Right cardiac atrium (tissue), 5 donors: ENCODE measurements at regions of chr11 and their contacts with region 1.

Region 1: GRCh38 chr11:15650105-15650938 is 535.6 kb downstream of the INSC start:
- DNase-seq: peak; percentile 96 to 99 (median 99)
- ATAC-seq: peak; percentile 98 to 100
- H3K4me3 ChIP-seq: peak overlapping the region; percentile 13
- H3K27ac ChIP-seq: peak overlapping the region; percentile 40
- H3K4me1 ChIP-seq: peaks cover 6% of the 10 kb centered on the region
- H3K27me3 ChIP-seq: no peaks in the 10 kb centered on the region

Region 2: GRCh38 chr11:15327786-15328231 is 322.5 kb before region 1 on chr11:
- intact Hi-C with region 1: loop called in 1 of 4 experiments (anchors 10 kb)
- DNase-seq: peak; percentile 59 to 84 (median 79)
- ATAC-seq: peak; percentile 78 to 81
- H3K4me3 ChIP-seq: no peak overlapping the region
- H3K27ac ChIP-seq: no peak overlapping the region
- H3K4me1 ChIP-seq: no peaks in the 10 kb centered on the region
- H3K27me3 ChIP-seq: no peaks in the 10 kb centered on the region

Region 3: DNA sequence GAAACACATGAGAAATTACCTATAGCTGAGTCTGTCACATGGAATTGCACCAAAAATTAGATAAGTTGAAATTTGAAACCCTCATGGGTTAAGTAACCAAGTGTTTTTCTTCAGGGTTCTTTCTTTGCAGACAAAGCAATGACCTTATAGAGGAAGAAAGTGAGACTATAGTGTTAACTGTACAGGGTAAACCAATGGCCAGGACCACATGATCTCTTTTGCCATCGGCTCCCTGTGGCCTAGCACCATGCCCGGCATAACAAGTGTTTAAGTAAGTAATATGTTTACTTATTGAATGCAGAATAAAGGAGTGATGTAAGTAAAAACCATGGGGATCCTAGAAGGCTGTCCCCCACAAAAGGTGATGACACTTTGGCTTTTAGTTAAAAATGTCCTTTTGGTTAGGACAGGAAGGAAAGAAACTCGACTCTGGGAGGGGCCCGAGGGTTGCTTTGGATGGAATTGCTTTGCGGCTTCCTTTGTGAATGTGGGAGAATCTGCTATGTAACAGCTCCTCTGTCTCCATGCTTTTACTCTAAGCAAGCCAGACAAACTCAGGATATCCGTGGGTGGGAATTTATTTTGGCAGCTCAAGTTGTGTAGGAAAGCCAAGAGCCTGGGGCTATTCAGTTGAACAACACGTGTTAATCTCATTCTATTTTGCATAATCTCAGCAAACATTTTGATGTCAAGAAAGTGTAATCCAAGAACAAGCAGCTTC is 80.9 kb before region 1 on chr11:
- intact Hi-C with region 1: no loop called
- DNase-seq: peak in 1 of 3 donors; percentile 34
- ATAC-seq: peak; percentile 93 to 97
- H3K4me3 ChIP-seq: no peak overlapping the region
- H3K27ac ChIP-seq: no peak overlapping the region
- H3K4me1 ChIP-seq: peaks cover 4% of the 10 kb centered on the region
- H3K27me3 ChIP-seq: no peaks in the 10 kb centered on the region

Region 4: DNA sequence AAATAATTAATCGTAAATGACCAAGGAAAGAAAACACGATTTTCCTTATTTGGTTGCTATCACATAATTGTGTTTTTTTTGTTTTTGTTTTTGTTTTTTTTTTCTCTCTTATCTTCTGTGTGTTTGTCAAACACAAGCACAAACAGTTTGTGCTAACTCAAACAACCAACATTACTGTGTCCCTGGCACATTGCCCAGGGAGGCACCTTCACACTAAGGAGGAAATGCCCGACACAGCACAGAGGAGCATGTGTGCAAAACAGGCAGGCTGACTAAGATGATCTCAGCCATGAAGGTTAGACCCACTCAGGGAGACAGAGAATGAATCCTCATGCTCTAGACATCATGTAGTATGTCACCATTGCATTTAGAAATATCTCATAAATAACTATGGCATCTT is 575.9 kb after region 1 on chr11:
- intact Hi-C with region 1: no loop called
- DNase-seq: peak; percentile 34 to 80 (median 57)
- ATAC-seq: peak; percentile 78 to 86
- H3K4me3 ChIP-seq: no peak overlapping the region
- H3K27ac ChIP-seq: no peak overlapping the region
- H3K4me1 ChIP-seq: peaks cover 2% of the 10 kb centered on the region
- H3K27me3 ChIP-seq: no peaks in the 10 kb centered on the region